ENCODE measurements at regions of chr5 and their contacts with region 1.

Region 1: DNA sequence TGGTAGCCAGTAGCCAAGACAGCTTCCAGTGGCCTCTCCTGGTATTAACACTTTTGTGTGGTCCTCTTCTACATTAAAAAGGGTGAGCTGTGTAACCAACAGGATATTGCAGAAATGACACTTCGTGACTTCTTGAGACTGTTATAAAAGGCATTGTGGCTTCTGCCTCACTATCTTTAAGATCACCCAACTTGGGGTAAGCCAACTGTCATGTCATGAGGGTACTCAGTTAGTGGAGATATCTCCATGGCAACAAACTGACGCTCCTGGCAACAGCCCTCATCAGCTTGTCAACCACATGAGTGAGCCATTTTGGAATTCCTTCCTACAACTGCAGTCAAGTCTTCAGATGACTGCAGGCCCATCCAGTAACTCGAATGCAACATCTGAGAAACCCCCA is 121.7 kb downstream of the DEPDC1B start:
- DNase-seq: no peak
- ATAC-seq: no peak
- H3K4me3 ChIP-seq: no peak overlapping the region
- H3K27ac ChIP-seq: no peak overlapping the region
- H3K4me1 ChIP-seq: no peaks in the 10 kb centered on the region
- H3K27me3 ChIP-seq: no peaks in the 10 kb centered on the region
- CTCF ChIP-seq: no peak

Region 2: DNA sequence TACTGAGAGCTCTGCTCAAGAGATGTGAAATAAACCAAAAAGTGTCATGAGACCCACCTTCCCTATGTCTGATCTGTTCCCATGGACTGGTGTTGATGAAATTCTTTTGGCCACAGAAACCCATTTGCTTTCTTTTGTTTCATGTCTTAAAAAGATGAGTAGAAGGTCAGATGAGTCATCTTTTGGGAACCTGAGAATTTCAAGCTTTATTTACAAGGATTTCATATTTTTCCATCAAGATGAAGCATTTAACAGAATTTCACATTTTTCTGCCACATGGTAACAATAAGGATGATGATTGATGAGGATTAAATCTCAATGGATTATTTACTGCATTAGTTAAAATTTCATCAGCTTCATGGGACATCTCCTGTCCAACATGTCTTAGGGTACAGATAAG is 216.2 kb before region 1 on chr5:
- intact Hi-C with region 1: no loop called
- DNase-seq: no peak
- ATAC-seq: no peak
- H3K4me3 ChIP-seq: no peak overlapping the region
- H3K27ac ChIP-seq: no peak overlapping the region
- H3K4me1 ChIP-seq: no peaks in the 10 kb centered on the region
- H3K27me3 ChIP-seq: no peaks in the 10 kb centered on the region
- CTCF ChIP-seq: no peak

Region 3: GRCh38 chr5:60540856-60541805 is 37.2 kb before region 1 on chr5:
- intact Hi-C with region 1: loop called in 1 of 10 experiments (anchors 5 kb)
- DNase-seq: peak in 1 of 2 donors; percentile 37
- ATAC-seq: peak in 5 of 8 donors; percentile 20 to 81 (median 79)
- H3K4me3 ChIP-seq: no peak overlapping the region
- H3K27ac ChIP-seq: peak overlapping the region in 5 of 10 donors; percentile 18 to 68 (median 42)
- H3K4me1 ChIP-seq: peaks cover 0 to 51% (median 9%) of the 10 kb centered on the region in 9 donors
- H3K27me3 ChIP-seq: no peaks in the 10 kb centered on the region
- CTCF ChIP-seq: no peak